Posterior cingulate gyrus (tissue), 11 donors: ENCODE measurements at regions of chr1 and their contacts with region 1.

Region 1: DNA sequence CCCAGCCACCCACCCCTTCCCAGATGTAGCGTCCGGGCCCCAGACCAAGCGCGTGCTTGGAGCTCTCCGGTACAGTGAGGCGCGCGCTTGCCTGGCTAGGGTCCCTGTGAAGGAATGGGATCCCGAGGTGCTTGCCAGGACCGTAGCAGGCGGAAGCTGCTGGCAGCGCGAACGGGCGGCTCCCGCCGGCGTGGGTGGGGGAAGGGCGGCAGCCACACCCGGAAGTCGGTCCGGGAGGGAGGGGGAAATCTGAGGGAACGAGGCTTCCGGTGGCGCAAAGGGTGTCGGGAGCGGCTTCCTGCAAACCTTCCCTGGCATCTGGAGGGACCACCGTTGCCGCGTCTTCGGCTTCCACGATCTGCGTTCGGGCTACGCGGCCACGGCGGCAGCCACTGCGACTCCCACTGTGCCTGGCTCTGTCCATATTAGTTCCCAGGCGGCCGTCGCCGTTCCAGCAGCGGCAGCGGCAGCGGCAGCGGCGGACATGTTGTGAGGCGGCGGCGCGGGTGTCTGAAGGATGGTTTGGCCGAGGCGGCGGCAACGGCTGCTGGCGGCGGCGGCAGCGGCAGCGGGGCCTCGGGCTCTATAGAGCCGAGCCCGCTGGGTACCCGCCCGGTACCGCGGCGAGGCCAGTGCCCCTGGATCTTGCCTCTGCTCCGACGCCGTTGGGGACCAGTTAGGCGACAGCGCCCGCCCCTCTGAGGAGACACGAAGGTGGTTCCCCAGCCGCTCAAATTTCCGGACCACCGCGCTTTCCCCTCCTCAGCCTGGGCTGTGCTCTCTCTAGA is at the start of gene DR1:
- DNase-seq: peak; percentile 89 to 99 (median 94)

Region 2: GRCh38 chr1:93143136-93143535 is 202.7 kb before region 1 on chr1:
- intact Hi-C with region 1: no loop called
- DNase-seq: no peak

Region 3: GRCh38 chr1:93179886-93180722 is 165.7 kb before region 1 on chr1 and contains the start of gene TMED5:
- intact Hi-C with region 1: loop called (anchors 5 kb)
- DNase-seq: peak; percentile 93 to 99 (median 97)